K562 (cell line): ENCODE measurements at regions of chr6 and their contacts with region 1.

Region 1: DNA sequence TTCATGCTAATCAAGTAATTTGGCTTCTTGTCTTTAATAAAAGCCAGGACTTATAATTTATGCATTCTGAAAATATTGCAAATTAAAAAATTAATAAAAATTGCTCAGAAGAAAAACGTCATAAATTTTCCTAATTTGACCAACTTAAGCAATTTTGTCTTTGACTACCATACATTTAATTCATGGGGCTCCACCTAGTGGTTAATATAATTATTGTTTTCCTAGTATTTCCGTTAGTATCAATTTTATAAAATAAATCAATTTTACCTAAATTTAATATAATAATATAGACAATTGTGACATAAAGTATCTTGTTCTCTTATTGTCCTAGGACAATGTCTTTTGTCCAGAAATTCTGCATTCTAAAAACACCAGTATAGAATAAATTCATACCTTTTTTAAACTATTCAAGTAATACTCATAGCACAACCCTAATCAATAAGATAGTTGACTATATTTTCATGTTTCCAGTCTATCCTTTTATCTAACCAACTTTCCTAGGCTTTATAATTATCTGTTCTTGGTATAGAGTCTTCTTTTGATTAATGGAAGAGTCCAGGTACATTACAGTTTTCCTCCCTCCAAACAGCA is 319.9 kb downstream of the TRDN start:
- DNase-seq: peak; percentile 9 to 22 (median 19)
- ATAC-seq: no peak
- H3K4me3 ChIP-seq: no peak overlapping the region
- H3K27ac ChIP-seq: no peak overlapping the region
- H3K4me1 ChIP-seq: no peaks in the 10 kb centered on the region
- H3K27me3 ChIP-seq: no peaks in the 10 kb centered on the region
- CTCF ChIP-seq: peak in 2 of 3 experiments; percentile 21 to 52; a peak in 3 of 6 replicates
- EP300 ChIP-seq: no peak
- POLR2A ChIP-seq: no peak
- RAD21 ChIP-seq: peak; percentile 42 to 57

Region 2: DNA sequence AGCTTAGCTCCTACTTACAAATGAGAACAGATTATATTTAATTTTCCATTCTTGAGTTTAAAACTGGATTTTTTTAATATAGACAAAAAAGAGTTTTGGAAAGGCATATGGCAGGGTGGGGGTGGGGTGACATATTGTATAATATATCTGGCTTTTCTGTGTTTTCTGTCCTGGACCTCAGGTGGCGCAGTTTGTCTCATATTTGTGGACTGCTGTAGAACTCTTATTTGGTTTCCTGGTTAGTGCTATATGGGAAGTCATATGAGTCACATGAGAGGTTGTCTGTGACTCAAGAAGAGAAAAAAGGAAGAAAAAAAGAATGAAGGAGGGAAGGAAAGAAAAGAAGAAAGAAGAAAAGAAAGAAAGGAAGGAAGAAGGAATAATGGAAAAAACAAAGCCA is 189.0 kb before region 1 on chr6:
- CTCF ChIA-PET with region 1: no interaction called
- POLR2A ChIA-PET with region 1: no interaction called
- in situ Hi-C with region 1: no loop called
- intact Hi-C with region 1: loop called (anchors 10 kb)
- DNase-seq: peak in 1 of 4 experiments; percentile 6
- ATAC-seq: no peak
- H3K4me3 ChIP-seq: no peak overlapping the region
- H3K27ac ChIP-seq: no peak overlapping the region
- H3K4me1 ChIP-seq: no peaks in the 10 kb centered on the region
- H3K27me3 ChIP-seq: no peaks in the 10 kb centered on the region
- CTCF ChIP-seq: no peak
- EP300 ChIP-seq: no peak
- POLR2A ChIP-seq: no peak
- RAD21 ChIP-seq: no peak